ENCODE measurements at regions of chr6 and their contacts with region 1.

Region 1: DNA sequence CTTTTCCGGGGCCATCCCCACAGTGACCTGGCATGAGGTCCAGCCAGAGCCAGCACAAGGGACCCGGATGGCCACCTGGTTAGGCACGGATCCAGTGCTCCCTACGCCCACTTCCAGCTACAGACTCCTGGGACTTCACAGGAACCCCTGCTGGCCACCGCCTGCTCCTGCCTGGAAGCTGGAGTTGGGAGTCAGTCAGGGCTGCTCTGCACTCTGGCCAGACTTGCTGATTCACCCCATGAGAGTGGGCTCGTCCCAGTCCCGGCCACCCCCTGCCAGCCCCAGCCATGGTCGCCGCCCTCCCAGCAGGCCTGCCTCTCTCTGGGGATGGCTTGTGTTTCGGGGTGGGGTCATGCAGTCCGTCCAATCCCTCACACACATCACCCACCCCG is 125.8 kb downstream of the DLL1 start:
- DNase-seq: no peak
- ATAC-seq: peak; percentile 27

Region 2: DNA sequence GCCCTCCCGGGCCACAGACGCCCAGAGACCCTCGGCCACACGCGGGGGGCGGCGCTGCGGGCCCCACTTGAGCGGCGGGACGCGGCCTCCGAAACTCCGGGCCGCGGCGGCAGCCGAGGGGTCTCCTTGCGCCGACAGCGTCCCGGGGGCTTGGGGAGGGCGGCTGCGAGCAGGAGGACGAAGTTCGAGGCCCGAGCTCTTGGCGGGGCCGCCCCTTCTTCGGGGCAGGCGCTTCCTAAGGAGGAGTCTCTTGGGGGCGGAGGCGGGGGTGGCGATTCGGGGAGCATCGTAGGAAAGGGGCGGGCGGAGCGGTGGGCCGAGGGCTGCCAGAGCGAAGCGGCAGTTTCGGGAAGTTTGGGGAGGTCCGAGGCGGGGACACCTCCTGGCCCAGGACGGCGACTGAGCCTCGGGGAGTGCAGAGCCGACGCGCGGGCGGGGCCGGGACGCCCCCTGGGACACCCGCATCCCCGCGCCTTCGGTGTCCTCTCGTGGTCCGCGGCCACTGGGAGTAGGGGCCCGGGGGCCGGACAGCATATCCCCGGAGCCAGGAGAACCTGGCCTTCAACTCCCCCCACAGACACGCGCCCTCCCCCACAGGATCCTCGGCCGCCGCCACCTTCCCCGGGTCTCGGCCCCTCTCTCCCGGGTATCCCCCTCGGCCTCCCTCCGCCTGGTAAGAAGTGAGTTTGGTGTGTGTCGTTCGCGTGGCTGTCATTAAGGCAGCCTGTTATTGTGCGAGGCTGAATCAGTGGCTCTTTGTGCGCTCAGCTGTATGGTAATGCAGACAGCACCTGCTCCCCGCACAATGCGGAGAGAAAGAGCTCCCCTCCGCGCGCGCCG is 126.4 kb after region 1 on chr6:
- intact Hi-C with region 1: loop called (anchors 5 kb)
- DNase-seq: peak; percentile 89
- ATAC-seq: peak; percentile 49

Measured in Right ventricle myocardium inferior (tissue), 1 donor.